ENCODE measurements at regions of chr11 and their contacts with region 1.

Region 1: GRCh38 chr11:84524422-84525051 is 1102.6 kb downstream of the DLG2 start:
- DNase-seq: no peak
- ATAC-seq: no peak
- H3K4me3 ChIP-seq: no peak overlapping the region
- H3K27ac ChIP-seq: no peak overlapping the region
- H3K4me1 ChIP-seq: no peaks in the 10 kb centered on the region
- H3K27me3 ChIP-seq: no peaks in the 10 kb centered on the region
- CTCF ChIP-seq: peak in 7 of 9 donors; percentile 28 to 55 (median 31)

Region 2: GRCh38 chr11:83827940-83828554 is 696.5 kb before region 1 on chr11:
- intact Hi-C with region 1: loop called in 7 of 10 experiments (anchors 5 to 10 kb)
- DNase-seq: no peak
- ATAC-seq: peak in 2 of 8 donors; percentile 30 to 54
- H3K4me3 ChIP-seq: peak overlapping the region in 5 of 10 donors; percentile 8 to 35 (median 30)
- H3K27ac ChIP-seq: no peak overlapping the region
- H3K4me1 ChIP-seq: no peaks in the 10 kb centered on the region
- H3K27me3 ChIP-seq: no peaks in the 10 kb centered on the region
- CTCF ChIP-seq: peak in 7 of 9 donors; percentile 45 to 63 (median 58)

Region 3: GRCh38 chr11:83836883-83837654 is 687.5 kb before region 1 on chr11:
- intact Hi-C with region 1: loop called in 8 of 10 experiments (anchors 5 to 10 kb)
- DNase-seq: peak in 1 of 2 donors; percentile 13
- ATAC-seq: peak in 7 of 8 donors; percentile 68 to 85 (median 82)
- H3K4me3 ChIP-seq: no peak overlapping the region
- H3K27ac ChIP-seq: no peak overlapping the region
- H3K4me1 ChIP-seq: peaks cover 0 to 4% (median 0%) of the 10 kb centered on the region in 9 donors
- H3K27me3 ChIP-seq: peaks cover 0 to 3% (median 0%) of the 10 kb centered on the region in 7 donors
- CTCF ChIP-seq: peak; percentile 38 to 71 (median 63)

Region 4: GRCh38 chr11:83845797-83846196 is 678.7 kb before region 1 on chr11:
- intact Hi-C with region 1: loop called in 1 of 10 experiments (anchors 10 kb)
- DNase-seq: no peak
- ATAC-seq: no peak
- H3K4me3 ChIP-seq: no peak overlapping the region
- H3K27ac ChIP-seq: no peak overlapping the region
- H3K4me1 ChIP-seq: no peaks in the 10 kb centered on the region
- H3K27me3 ChIP-seq: no peaks in the 10 kb centered on the region
- CTCF ChIP-seq: no peak

Region 5: GRCh38 chr11:84384731-84385130 is 139.8 kb before region 1 on chr11:
- intact Hi-C with region 1: loop called in 4 of 10 experiments (anchors 5 to 10 kb)
- DNase-seq: peak in 1 of 2 donors; percentile 28
- ATAC-seq: peak in 1 of 8 donors; percentile 33
- H3K4me3 ChIP-seq: no peak overlapping the region
- H3K27ac ChIP-seq: no peak overlapping the region
- H3K4me1 ChIP-seq: no peaks in the 10 kb centered on the region
- H3K27me3 ChIP-seq: no peaks in the 10 kb centered on the region
- CTCF ChIP-seq: peak; percentile 54 to 84 (median 80)

Region 6: GRCh38 chr11:84398017-84398626 is 126.4 kb before region 1 on chr11:
- intact Hi-C with region 1: loop called in 3 of 10 experiments (anchors 10 kb)
- DNase-seq: no peak
- ATAC-seq: no peak
- H3K4me3 ChIP-seq: no peak overlapping the region
- H3K27ac ChIP-seq: no peak overlapping the region
- H3K4me1 ChIP-seq: no peaks in the 10 kb centered on the region
- H3K27me3 ChIP-seq: no peaks in the 10 kb centered on the region
- CTCF ChIP-seq: peak in 6 of 9 donors; percentile 8 to 27 (median 20)

Measured in heart right ventricle (tissue), 16 donors.